Mammary epithelial cell (primary cell): ENCODE measurements at regions of chr7 and their contacts with region 1.

Region 1: GRCh38 chr7:138002096-138002827 is 376 bp upstream of the CREB3L2 start:
- DNase-seq: peak; percentile 100
- H3K4me3 ChIP-seq: peak overlapping the region; percentile 91 to 98 (median 94)
- H3K27ac ChIP-seq: peak overlapping the region; percentile 87
- H3K4me1 ChIP-seq: peaks cover 25% of the 10 kb centered on the region
- H3K27me3 ChIP-seq: no peaks in the 10 kb centered on the region
- CTCF ChIP-seq: peak; percentile 79 to 81

Region 2: DNA sequence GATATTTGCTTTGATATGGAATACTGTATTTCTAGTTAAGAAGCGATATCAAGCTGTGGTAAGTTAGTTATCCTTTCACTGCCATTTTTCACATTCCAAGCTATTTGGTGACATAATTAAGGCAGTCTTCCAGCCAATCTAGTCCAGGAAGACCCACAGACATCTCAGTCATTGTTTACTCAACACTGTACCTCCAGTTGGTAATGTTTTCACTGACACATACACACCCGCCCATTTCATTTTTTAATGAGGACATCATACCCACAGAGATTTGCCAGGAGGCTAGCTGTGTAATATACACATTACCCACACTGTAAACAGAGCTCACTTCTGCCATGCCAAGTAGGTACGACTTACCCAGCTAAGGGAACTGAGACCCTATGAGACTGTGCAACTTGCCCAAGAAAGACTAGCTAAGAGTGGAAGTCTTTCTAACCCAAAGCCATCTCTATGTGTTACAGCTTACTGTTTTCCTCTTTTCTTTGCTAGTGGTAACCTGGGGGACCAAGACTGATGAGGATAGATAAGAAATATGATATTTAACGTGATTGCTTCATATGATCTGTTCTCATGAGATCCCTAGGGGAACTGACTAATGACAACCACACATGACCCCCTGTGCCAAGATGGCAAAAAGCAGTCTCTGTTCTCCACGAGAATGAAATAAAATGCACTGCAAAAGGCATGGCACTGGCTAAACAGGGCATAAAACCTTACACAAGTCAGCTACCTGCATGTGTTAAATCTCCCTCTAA is 334.5 kb before region 1 on chr7:
- CTCF ChIA-PET with region 1: no interaction called
- dilution Hi-C with region 1: no loop called
- in situ Hi-C with region 1: no loop called
- intact Hi-C with region 1: loop called (anchors 5 kb)
- DNase-seq: peak; percentile 85
- H3K4me3 ChIP-seq: no peak overlapping the region
- H3K27ac ChIP-seq: peak overlapping the region; percentile 50
- H3K4me1 ChIP-seq: peaks cover 35% of the 10 kb centered on the region
- H3K27me3 ChIP-seq: no peaks in the 10 kb centered on the region
- CTCF ChIP-seq: no peak

Region 3: DNA sequence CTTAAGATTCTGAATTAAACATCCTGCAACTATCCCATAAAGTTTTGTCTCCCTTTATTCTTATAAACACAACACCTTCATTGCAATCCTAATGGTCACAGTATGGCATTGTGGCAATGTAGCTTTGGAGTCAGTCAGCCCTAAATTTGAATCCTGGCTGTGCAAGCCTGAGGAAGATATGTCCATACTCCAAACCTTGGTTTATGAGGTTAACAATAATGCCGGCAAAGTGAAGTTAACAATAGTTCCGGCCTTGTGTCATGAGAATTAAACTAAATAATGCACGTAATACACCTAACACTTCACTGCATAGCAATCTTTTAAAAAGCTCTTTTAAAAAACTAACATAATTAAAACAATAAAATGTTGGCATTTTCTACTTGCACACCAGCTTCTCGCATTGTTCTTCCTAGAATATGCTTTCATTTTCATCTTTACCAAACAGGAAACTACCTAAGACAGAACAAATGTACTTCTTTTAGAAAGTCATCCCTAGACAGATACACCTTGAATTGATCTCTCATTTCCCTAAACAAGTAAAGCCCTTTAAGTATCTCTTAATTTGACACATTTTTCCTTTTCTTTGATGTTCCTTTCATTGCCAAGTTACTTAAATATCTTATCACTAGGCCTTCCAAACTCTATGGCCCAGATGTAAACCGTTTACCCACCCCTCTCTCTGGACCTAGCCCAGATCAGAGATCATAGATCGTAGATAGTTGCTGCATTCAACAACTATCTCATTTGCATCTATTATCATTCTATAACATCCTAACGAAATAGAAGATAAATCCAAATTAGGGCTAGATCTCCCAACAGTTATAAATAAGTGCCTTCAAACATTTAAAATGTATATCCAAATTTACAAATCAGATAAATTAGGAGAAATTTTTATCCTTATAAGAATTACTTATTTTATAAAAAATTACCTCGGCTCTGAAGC is 67.0 kb before region 1 on chr7:
- CTCF ChIA-PET with region 1: no interaction called
- dilution Hi-C with region 1: loop called (anchors 5 kb)
- in situ Hi-C with region 1: no loop called
- intact Hi-C with region 1: loop called (anchors 1 kb)
- DNase-seq: no peak
- H3K4me3 ChIP-seq: no peak overlapping the region
- H3K27ac ChIP-seq: peak overlapping the region; percentile 22
- H3K4me1 ChIP-seq: peaks cover 52% of the 10 kb centered on the region
- H3K27me3 ChIP-seq: no peaks in the 10 kb centered on the region
- CTCF ChIP-seq: no peak

Region 4: DNA sequence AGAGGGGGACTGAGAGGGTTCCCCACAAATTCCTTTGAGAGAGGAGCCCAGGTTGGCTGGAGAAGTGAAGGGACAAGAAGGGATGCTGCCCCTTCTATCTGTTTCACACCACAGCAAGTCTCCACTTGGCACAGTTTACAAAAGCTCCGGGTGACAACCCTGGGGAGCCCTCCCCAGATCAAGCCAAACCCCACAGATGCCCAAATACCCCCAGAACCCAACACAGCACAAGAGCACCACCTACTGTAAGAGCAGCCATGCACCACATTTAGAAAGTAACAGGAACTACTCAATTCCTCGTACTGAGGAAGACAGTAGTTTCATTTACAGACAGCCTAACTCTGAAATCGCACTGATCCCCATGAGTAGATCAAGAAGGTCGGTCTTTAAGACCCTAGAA is 863.6 kb after region 1 on chr7:
- CTCF ChIA-PET with region 1: no interaction called
- dilution Hi-C with region 1: no loop called
- in situ Hi-C with region 1: no loop called
- intact Hi-C with region 1: loop called (anchors 10 kb)
- DNase-seq: no peak
- H3K4me3 ChIP-seq: no peak overlapping the region
- H3K27ac ChIP-seq: no peak overlapping the region
- H3K4me1 ChIP-seq: peaks cover 7% of the 10 kb centered on the region
- H3K27me3 ChIP-seq: no peaks in the 10 kb centered on the region
- CTCF ChIP-seq: peak; percentile 37 to 69